Activated CD4-positive, alpha-beta T cell treated with anti-CD3 and anti-CD28 coated beads for 36 hours (primary cell): ENCODE measurements at regions of chr2 and their contacts with region 1.

Region 1: GRCh38 chr2:43158259-43158880 is 68.0 kb downstream of the ZFP36L2 start:
- DNase-seq: peak; percentile 88
- ATAC-seq: peak; percentile 70
- H3K4me3 Mint-ChIP-seq: peak overlapping the region; percentile 63
- H3K27ac Mint-ChIP-seq: peak overlapping the region; percentile 96
- H3K4me1 Mint-ChIP-seq: peaks cover 60% of the 10 kb centered on the region
- H3K27me3 Mint-ChIP-seq: no peaks in the 10 kb centered on the region

Region 2: GRCh38 chr2:42979416-42979869 is 178.9 kb before region 1 on chr2:
- CTCF ChIA-PET with region 1: no interaction called
- POLR2A ChIA-PET with region 1: no interaction called
- intact Hi-C with region 1: no loop called
- DNase-seq: no peak
- ATAC-seq: no peak
- H3K4me3 Mint-ChIP-seq: no peak overlapping the region
- H3K27ac Mint-ChIP-seq: no peak overlapping the region
- H3K4me1 Mint-ChIP-seq: peaks cover 6% of the 10 kb centered on the region
- H3K27me3 Mint-ChIP-seq: no peaks in the 10 kb centered on the region

Region 3: GRCh38 chr2:43059183-43059897 is 99.0 kb before region 1 on chr2:
- CTCF ChIA-PET with region 1: no interaction called
- POLR2A ChIA-PET with region 1: interaction called, 3 read pairs
- intact Hi-C with region 1: loop called in 1 of 2 experiments (anchors 1 kb)
- DNase-seq: peak; percentile 87
- ATAC-seq: peak; percentile 97
- H3K4me3 Mint-ChIP-seq: peak overlapping the region; percentile 14
- H3K27ac Mint-ChIP-seq: peak overlapping the region; percentile 77
- H3K4me1 Mint-ChIP-seq: peaks cover 35% of the 10 kb centered on the region
- H3K27me3 Mint-ChIP-seq: no peaks in the 10 kb centered on the region

Region 4: DNA sequence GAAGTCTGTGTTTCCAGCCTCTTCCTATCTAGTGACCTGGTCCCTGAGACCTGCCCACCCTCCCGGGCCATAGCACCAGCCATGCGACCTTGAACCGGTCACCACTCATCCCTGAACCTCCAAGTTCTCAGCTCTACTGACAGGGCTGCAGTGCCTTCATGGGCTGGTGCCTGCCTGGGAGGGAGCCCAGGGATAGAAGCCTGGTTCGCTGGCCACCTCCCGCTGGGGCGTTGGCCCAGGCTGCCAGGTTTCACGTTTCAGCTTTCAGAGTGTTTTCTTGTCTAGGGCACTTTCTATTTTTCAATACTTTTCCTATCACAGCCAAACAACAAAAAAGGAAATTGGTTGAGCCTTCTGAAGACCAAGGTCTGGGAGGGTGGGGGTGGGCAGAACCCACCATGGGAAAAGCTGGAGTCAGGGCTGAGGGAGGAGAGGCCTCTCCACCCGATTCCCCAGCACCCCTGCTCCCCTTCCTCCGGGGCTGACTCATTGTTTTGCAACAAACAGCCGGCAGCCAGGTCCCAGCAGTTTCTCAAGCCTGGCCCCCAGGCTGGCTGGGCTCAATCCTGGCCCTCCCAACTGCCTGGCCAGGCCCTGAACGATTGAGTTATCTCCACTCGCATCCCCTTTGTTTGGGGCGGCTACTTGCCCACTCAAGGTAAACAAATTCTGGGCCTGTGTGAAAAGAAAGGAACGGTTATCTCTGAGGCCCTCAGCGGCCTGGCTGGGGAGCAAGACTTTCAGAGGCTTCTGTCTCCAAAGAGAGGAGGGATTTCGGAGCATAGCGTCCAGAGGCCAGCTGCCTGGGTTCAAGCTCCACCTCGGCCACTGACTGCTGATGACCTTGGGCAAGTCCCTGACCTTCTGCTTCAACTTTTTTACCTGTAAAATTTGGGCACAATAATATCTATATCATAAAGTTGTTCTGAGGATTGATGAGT is 20.5 kb after region 1 on chr2:
- CTCF ChIA-PET with region 1: interaction called, 3 read pairs
- POLR2A ChIA-PET with region 1: interaction called, 5 read pairs
- intact Hi-C with region 1: loop called (anchors 1 kb)
- DNase-seq: peak; percentile 57
- ATAC-seq: peak; percentile 10
- H3K4me3 Mint-ChIP-seq: peak overlapping the region; percentile 16
- H3K27ac Mint-ChIP-seq: peak overlapping the region; percentile 90
- H3K4me1 Mint-ChIP-seq: peaks cover 69% of the 10 kb centered on the region
- H3K27me3 Mint-ChIP-seq: no peaks in the 10 kb centered on the region